ENCODE measurements at regions of chr10 and their contacts with region 1.

Region 1: DNA sequence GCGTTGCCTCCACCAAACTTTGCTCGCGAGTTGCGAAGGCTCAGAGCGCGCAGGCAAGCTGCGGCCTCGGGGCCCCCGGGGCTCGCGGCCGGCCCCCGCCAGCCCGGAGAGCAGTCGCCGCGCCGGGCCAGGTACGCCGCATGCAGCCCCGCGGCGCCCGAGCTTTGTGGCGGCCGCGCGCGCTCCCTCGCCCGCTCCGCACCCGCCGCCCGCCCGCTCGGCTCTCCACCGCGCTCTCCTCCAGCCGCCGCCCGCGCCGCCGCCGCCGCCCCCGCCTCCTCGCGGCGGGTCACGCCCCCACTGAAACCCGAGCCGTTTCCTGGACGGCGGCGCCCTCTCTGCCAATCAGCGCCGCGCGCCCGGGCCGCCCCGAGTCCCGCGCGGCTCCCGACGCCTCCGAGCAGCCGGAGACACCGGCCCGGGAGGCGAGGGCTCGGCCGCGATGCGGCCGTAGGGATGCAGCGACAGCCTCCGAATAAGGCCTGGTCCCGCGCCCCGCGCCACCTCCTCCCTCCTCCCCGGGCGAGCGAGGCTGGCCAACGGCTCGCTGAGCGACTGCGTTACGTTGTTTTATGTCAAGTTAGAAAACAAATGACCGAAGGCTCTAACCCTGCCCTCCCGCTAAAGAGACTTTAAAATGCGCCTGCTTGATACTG is at the start of gene FGFR2:
- DNase-seq: peak; percentile 33 to 91
- H3K4me3 ChIP-seq: peak within 1 kb of the TSS; percentile 66 to 69
- H3K27ac ChIP-seq: peak within 1 kb of the TSS; percentile 82 to 83
- H3K4me1 ChIP-seq: peaks cover 0 to 3% of the 10 kb centered on the region in 2 donors
- H3K27me3 ChIP-seq: no peaks in the 10 kb centered on the region
- CTCF ChIP-seq: no peak
- total RNA-seq, gene FGFR2: 4.4 TPM

Region 2: GRCh38 chr10:121459765-121460453 is 138.4 kb before region 1 on chr10:
- intact Hi-C with region 1: loop called (anchors 1 kb)
- DNase-seq: peak in 1 of 2 donors; percentile 85
- H3K4me3 ChIP-seq: peak overlapping the region; percentile 12 to 28
- H3K27ac ChIP-seq: peak overlapping the region; percentile 84 to 89
- H3K4me1 ChIP-seq: peaks cover 7 to 20% of the 10 kb centered on the region in 2 donors
- H3K27me3 ChIP-seq: no peaks in the 10 kb centered on the region
- CTCF ChIP-seq: no peak

Region 3: DNA sequence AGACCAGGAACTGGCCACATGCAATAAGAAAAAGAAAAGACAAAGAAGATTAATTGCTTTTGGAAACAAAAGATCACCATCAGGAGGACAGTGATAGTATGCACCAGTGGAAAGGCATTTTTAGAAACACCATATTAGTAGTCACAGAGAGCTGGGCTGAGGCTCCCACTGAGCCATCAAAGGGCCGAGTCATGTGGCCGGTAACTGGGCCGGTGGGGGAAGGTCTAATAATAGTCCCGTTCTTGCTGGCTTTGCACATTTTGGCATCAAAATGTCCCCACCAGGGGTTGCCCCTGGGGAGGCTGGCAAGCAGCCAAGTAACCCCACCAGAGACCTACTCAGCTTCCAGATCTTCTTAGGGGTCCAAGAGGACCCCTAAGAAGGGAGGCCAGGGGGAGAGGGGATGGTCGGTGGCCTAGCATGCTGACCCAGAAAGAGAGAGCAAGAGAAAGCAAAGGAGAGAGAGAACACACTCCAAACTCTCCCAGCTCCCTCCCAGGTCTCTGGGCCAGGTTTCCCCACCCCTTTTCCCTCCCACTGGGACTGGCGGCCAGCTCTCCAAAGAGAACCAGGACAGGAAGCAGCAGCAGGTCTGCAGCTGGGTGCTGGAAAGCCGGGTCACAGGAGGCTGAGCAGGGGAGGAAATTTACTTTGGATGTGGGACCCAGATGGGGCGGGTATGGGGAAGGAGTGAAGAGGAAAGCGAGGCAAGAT is 70.1 kb after region 1 on chr10:
- intact Hi-C with region 1: loop called (anchors 5 kb)
- DNase-seq: peak; percentile 35 to 77
- H3K4me3 ChIP-seq: peak overlapping the region in 1 of 2 donors; percentile 51
- H3K27ac ChIP-seq: peak overlapping the region; percentile 83 to 91
- H3K4me1 ChIP-seq: peaks cover 7 to 8% of the 10 kb centered on the region in 2 donors
- H3K27me3 ChIP-seq: no peaks in the 10 kb centered on the region
- CTCF ChIP-seq: no peak